Naive thymus-derived CD4-positive, alpha-beta T cell (primary cell): ENCODE measurements at regions of chr12 and their contacts with region 1.

Region 1: DNA sequence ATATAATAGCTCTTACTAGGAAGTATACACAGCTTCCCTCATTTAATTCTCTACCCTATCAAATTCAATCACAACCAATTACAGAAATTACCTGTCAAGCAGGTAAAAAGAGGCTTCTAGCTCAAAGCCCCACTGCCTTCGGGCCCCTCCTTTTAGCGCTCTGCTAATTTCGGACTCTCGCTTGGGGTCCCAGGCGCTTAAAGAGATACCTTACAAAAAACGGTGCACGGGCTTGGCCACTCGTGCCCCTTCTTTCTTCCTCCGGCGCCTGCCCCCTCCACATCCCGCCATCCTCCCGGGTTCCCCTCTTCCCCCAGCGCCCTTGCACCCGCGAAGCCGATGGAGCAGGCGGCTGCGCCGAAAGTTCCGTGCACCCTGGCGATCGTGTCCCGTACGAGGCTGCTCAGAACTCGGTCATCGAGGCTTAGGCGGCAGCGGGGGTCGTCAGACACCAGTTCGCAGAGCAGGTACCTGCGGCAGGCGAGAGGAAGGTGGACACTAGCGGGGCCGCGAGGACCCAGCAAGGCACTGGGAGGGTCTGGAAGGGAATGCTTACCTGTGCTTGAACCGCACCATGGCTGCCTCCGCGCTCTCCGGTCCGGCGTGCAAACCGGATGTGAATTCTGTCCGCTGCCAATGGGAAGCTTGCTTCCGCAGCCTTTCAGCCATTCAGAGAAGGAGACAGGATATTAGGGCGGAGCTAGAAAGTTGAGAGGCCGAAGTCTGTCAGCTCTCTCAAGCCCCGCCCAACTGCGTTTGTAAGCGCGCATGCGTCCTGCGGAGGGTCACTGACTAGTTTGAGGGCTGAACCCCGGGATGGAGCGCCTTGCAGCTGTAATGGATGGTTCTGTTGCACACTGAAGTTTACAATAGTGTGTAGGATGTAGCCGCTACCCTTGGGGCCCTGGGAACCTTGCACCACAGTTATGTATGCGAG is at the start of gene POP5:
- DNase-seq: peak; percentile 72 to 93 (median 89)
- ATAC-seq: peak; percentile 97
- H3K4me3 ChIP-seq: peak within 1 kb of the TSS; percentile 99
- H3K4me3 Mint-ChIP-seq: peak within 1 kb of the TSS; percentile 95 to 99 (median 98)
- H3K27ac ChIP-seq: peak within 1 kb of the TSS; percentile 77
- H3K27ac Mint-ChIP-seq: peak within 1 kb of the TSS; percentile 81 to 97 (median 94)
- H3K4me1 ChIP-seq: peaks cover 4 to 21% of the 10 kb centered on the region in 2 donors
- H3K4me1 Mint-ChIP-seq: peaks cover 24 to 47% (median 34%) of the 10 kb centered on the region in 7 donors
- H3K27me3 ChIP-seq: no peaks in the 10 kb centered on the region
- H3K27me3 Mint-ChIP-seq: peaks cover 0 to 27% (median 7%) of the 10 kb centered on the region in 5 donors
- total RNA-seq, gene POP5: 42.9 to 86.8 (median 59.0) TPM

Region 2: GRCh38 chr12:120437754-120438494 is 143.1 kb before region 1 on chr12 and contains the start of gene COX6A1:
- CTCF ChIA-PET with region 1: no interaction called
- POLR2A ChIA-PET with region 1: interaction called, 4 read pairs
- intact Hi-C with region 1: loop called in 1 of 2 experiments (anchors 1 kb)
- DNase-seq: peak; percentile 77 to 99 (median 96)
- ATAC-seq: peak; percentile 96
- H3K4me3 ChIP-seq: peak within 1 kb of the TSS; percentile 63
- H3K4me3 Mint-ChIP-seq: peak within 1 kb of the TSS; percentile 87 to 100 (median 96)
- H3K27ac ChIP-seq: peak within 1 kb of the TSS; percentile 83
- H3K27ac Mint-ChIP-seq: peak within 1 kb of the TSS; percentile 88 to 97 (median 93)
- H3K4me1 ChIP-seq: peaks cover 15 to 20% of the 10 kb centered on the region in 2 donors
- H3K4me1 Mint-ChIP-seq: peaks cover 17 to 33% (median 30%) of the 10 kb centered on the region in 7 donors
- H3K27me3 ChIP-seq: no peaks in the 10 kb centered on the region
- H3K27me3 Mint-ChIP-seq: peaks cover 0 to 4% (median 2%) of the 10 kb centered on the region in 5 donors
- total RNA-seq, gene COX6A1: 118 to 270 (median 130) TPM

Region 3: GRCh38 chr12:120495723-120496412 is 85.2 kb before region 1 on chr12 and contains the start of gene DYNLL1:
- CTCF ChIA-PET with region 1: no interaction called
- POLR2A ChIA-PET with region 1: interaction called, 9 read pairs
- intact Hi-C with region 1: loop called in 1 of 2 experiments (anchors 1 kb)
- DNase-seq: peak; percentile 95 to 99 (median 97)
- ATAC-seq: peak; percentile 99
- H3K4me3 ChIP-seq: peak within 1 kb of the TSS; percentile 82
- H3K4me3 Mint-ChIP-seq: peak within 1 kb of the TSS; percentile 83 to 98 (median 94)
- H3K27ac ChIP-seq: peak within 1 kb of the TSS; percentile 84
- H3K27ac Mint-ChIP-seq: peak within 1 kb of the TSS; percentile 58 to 94 (median 90)
- H3K4me1 ChIP-seq: peaks cover 9% of the 10 kb centered on the region in 2 donors
- H3K4me1 Mint-ChIP-seq: peaks cover 13 to 48% (median 33%) of the 10 kb centered on the region in 7 donors
- H3K27me3 ChIP-seq: no peaks in the 10 kb centered on the region
- H3K27me3 Mint-ChIP-seq: no peaks in the 10 kb centered on the region
- total RNA-seq, gene DYNLL1: 35.0 to 301 (median 72.7) TPM

Region 4: DNA sequence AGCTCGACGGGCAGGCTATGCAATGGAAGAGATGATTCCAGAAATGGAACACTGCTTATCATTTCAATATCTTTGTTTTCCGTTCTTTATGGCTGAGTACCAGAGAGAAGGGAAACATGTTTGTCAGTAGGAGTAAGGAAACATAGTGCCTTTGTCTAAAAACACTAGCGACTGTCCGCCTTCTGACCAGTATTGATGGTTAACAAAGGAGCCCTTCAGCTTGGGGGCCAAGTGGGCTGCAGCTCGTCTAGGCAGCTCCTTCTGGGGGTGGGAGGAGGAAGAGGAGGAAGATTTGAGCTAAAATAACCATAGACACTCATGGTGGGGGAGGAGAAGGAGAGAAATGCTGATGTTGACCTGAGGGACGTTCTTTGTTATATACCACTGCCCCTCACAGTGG is 67.1 kb before region 1 on chr12:
- CTCF ChIA-PET with region 1: no interaction called
- POLR2A ChIA-PET with region 1: no interaction called
- intact Hi-C with region 1: no loop called
- DNase-seq: no peak
- ATAC-seq: no peak
- H3K4me3 ChIP-seq: no peak overlapping the region
- H3K4me3 Mint-ChIP-seq: no peak overlapping the region
- H3K27ac ChIP-seq: no peak overlapping the region
- H3K27ac Mint-ChIP-seq: no peak overlapping the region
- H3K4me1 ChIP-seq: no peaks in the 10 kb centered on the region
- H3K4me1 Mint-ChIP-seq: no peaks in the 10 kb centered on the region
- H3K27me3 ChIP-seq: no peaks in the 10 kb centered on the region
- H3K27me3 Mint-ChIP-seq: no peaks in the 10 kb centered on the region

Region 5: GRCh38 chr12:120649442-120650232 is 68.6 kb after region 1 on chr12:
- CTCF ChIA-PET with region 1: interaction called, 31 read pairs
- POLR2A ChIA-PET with region 1: interaction called, 3 read pairs
- intact Hi-C with region 1: loop called (anchors 1 kb)
- DNase-seq: no peak
- ATAC-seq: no peak
- H3K4me3 ChIP-seq: no peak overlapping the region
- H3K4me3 Mint-ChIP-seq: peak overlapping the region in 8 of 10 donors; percentile 31 to 78 (median 49)
- H3K27ac ChIP-seq: no peak overlapping the region
- H3K27ac Mint-ChIP-seq: no peak overlapping the region
- H3K4me1 ChIP-seq: peaks cover 6 to 7% of the 10 kb centered on the region in 2 donors
- H3K4me1 Mint-ChIP-seq: peaks cover 6 to 16% (median 13%) of the 10 kb centered on the region in 7 donors
- H3K27me3 ChIP-seq: peaks cover 3 to 5% of the 10 kb centered on the region in 2 donors
- H3K27me3 Mint-ChIP-seq: peaks cover 42 to 63% (median 58%) of the 10 kb centered on the region in 5 donors

Region 6: GRCh38 chr12:120971299-120972179 is 390.5 kb after region 1 on chr12:
- CTCF ChIA-PET with region 1: interaction called, 11 read pairs
- POLR2A ChIA-PET with region 1: interaction called, 5 read pairs
- intact Hi-C with region 1: loop called (anchors 1 to 2 kb)
- DNase-seq: peak in 8 of 9 donors; percentile 25 to 75 (median 63)
- ATAC-seq: peak; percentile 95
- H3K4me3 ChIP-seq: no peak overlapping the region
- H3K4me3 Mint-ChIP-seq: no peak overlapping the region
- H3K27ac ChIP-seq: no peak overlapping the region
- H3K27ac Mint-ChIP-seq: peak overlapping the region in 1 of 9 donors; percentile 77
- H3K4me1 ChIP-seq: no peaks in the 10 kb centered on the region
- H3K4me1 Mint-ChIP-seq: peaks cover 0 to 8% (median 7%) of the 10 kb centered on the region in 7 donors
- H3K27me3 ChIP-seq: no peaks in the 10 kb centered on the region
- H3K27me3 Mint-ChIP-seq: peaks cover 0 to 3% (median 0%) of the 10 kb centered on the region in 5 donors

Region 7: GRCh38 chr12:121110211-121110940 is 529.3 kb after region 1 on chr12:
- CTCF ChIA-PET with region 1: interaction called, 3 read pairs
- POLR2A ChIA-PET with region 1: no interaction called
- intact Hi-C with region 1: loop called in 1 of 2 experiments (anchors 1 kb)
- DNase-seq: peak; percentile 29 to 69 (median 50)
- ATAC-seq: peak; percentile 92
- H3K4me3 ChIP-seq: no peak overlapping the region
- H3K4me3 Mint-ChIP-seq: no peak overlapping the region
- H3K27ac ChIP-seq: no peak overlapping the region
- H3K27ac Mint-ChIP-seq: peak overlapping the region in 2 of 9 donors; percentile 1 to 32
- H3K4me1 ChIP-seq: no peaks in the 10 kb centered on the region
- H3K4me1 Mint-ChIP-seq: peaks cover 3 to 12% (median 5%) of the 10 kb centered on the region in 7 donors
- H3K27me3 ChIP-seq: no peaks in the 10 kb centered on the region
- H3K27me3 Mint-ChIP-seq: no peaks in the 10 kb centered on the region